Panc1 (cell line): ENCODE measurements at regions of chr10 and their contacts with region 1.

Region 1: DNA sequence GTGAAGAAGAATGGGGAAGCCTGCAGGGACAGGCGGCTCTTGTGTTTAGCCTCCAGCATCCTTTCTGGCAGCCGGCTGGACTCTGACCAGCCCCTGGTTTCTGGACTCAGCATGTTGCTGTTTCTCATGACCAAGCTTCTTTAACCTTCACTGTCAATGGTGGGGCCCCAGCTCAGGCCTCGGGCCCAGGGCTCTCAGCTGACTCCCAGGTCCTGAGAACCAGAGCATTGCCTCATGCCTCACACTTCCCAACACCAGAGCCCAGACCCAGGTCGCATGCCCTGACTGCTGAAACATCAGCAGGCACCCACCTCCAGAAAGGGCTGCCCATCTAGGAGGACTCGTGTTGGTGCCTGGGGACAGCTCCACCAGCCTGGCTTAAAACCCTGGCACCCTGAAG is 34.8 kb upstream of the FGFR2 start:
- DNase-seq: no peak
- ATAC-seq: peak; percentile 48; the same call in 1 of the 2 replicates
- H3K4me3 ChIP-seq: no peak overlapping the region
- H3K27ac ChIP-seq: no peak overlapping the region
- H3K4me1 ChIP-seq: no peaks in the 10 kb centered on the region
- H3K27me3 ChIP-seq: no peaks in the 10 kb centered on the region; the same call in 1 of the 2 replicates
- CTCF ChIP-seq: no peak

Region 2: GRCh38 chr10:119973261-119973660 is 1659.8 kb before region 1 on chr10:
- CTCF ChIA-PET with region 1: no interaction called
- POLR2A ChIA-PET with region 1: interaction called, 17 read pairs
- in situ Hi-C with region 1: no loop called
- intact Hi-C with region 1: no loop called
- DNase-seq: no peak
- ATAC-seq: no peak
- H3K4me3 ChIP-seq: no peak overlapping the region
- H3K27ac ChIP-seq: no peak overlapping the region
- H3K4me1 ChIP-seq: no peaks in the 10 kb centered on the region
- H3K27me3 ChIP-seq: no peaks in the 10 kb centered on the region
- CTCF ChIP-seq: no peak

Region 3: DNA sequence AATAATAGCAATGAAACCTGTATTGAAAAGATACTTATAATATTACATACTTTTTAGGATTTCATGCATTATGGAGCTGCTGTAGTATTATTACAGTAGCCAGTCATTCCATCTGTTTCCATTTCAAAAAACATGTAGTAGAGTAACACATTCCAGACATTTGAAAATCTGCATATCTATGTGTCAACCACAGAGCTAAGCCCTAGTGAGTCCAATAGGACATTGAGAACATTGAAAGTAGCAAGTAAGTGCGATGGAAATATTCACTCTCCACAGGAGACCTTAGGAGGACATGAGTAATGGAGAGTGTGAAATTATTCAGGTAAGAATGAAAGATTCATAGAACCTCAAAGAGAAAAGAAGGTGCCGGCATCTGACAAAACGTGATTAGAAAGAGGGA is 326.6 kb after region 1 on chr10:
- CTCF ChIA-PET with region 1: no interaction called
- POLR2A ChIA-PET with region 1: no interaction called
- in situ Hi-C with region 1: no loop called
- intact Hi-C with region 1: no loop called
- DNase-seq: no peak
- ATAC-seq: no peak
- H3K4me3 ChIP-seq: no peak overlapping the region
- H3K27ac ChIP-seq: no peak overlapping the region
- H3K4me1 ChIP-seq: no peaks in the 10 kb centered on the region
- H3K27me3 ChIP-seq: no peaks in the 10 kb centered on the region
- CTCF ChIP-seq: no peak